Activated CD4-positive, alpha-beta memory T cell treated with anti-CD3 and anti-CD28 coated beads, Interleukin-2, amount 10 ng/mL, durations not matched to agents 7 days and 5 days (primary cell): ENCODE measurements at regions of chr9 and their contacts with region 1.

Region 1: GRCh38 chr9:35790385-35791296 is 750 bp upstream of the NPR2 start:
- DNase-seq: peak; percentile 59
- H3K4me3 Mint-ChIP-seq: no peak overlapping the region
- H3K27ac Mint-ChIP-seq: no peak overlapping the region
- H3K4me1 Mint-ChIP-seq: peaks cover 14% of the 10 kb centered on the region
- H3K27me3 Mint-ChIP-seq: no peaks in the 10 kb centered on the region

Region 2: DNA sequence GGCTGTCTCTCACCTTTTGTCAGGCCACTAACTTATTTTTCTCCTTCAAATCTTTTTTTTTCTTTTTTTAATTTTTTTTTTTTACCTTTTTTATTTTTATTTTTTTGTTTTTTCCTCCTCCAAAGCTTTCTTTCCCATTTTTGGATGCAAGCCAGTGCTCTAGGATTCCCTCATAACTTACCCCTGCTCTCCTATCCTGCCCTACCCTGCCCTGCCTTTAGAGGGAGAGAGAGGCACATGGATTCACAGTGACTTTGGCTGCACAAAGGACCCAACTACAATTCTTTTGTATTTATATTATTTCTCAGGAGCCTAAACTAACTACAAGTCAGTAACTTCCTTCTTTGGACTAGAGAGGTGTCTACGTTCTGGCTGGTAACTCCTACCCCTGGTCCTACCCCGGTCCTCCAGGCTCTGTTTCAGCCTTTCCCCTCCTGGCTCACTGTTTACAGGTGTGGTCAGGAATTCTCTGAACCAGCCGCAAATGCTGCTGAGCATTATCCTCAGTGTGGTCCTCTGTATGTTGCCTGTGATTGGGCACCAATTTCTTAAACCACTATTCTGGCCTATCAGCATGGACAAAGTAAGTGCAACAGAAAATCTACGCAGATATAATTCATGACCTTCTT is 309.2 kb before region 1 on chr9:
- CTCF ChIA-PET with region 1: no interaction called
- POLR2A ChIA-PET with region 1: no interaction called
- DNase-seq: peak; percentile 33
- H3K4me3 Mint-ChIP-seq: no peak overlapping the region
- H3K27ac Mint-ChIP-seq: no peak overlapping the region
- H3K4me1 Mint-ChIP-seq: no peaks in the 10 kb centered on the region
- H3K27me3 Mint-ChIP-seq: peaks cover 3% of the 10 kb centered on the region

Region 3: GRCh38 chr9:35814841-35815543 is 24.4 kb after region 1 on chr9 and contains the start of gene HINT2:
- CTCF ChIA-PET with region 1: interaction called, 16 read pairs
- POLR2A ChIA-PET with region 1: interaction called, 4 read pairs
- DNase-seq: peak; percentile 99
- H3K4me3 Mint-ChIP-seq: peak within 1 kb of the TSS; percentile 87
- H3K27ac Mint-ChIP-seq: peak within 1 kb of the TSS; percentile 92
- H3K4me1 Mint-ChIP-seq: peaks cover 45% of the 10 kb centered on the region
- H3K27me3 Mint-ChIP-seq: peaks cover 4% of the 10 kb centered on the region
- total RNA-seq, gene HINT2: 77.8 to 79.2 TPM

Region 4: GRCh38 chr9:35826071-35826701 is 35.5 kb after region 1 on chr9:
- CTCF ChIA-PET with region 1: interaction called, 35 read pairs
- POLR2A ChIA-PET with region 1: no interaction called
- DNase-seq: peak; percentile 31
- H3K4me3 Mint-ChIP-seq: no peak overlapping the region
- H3K27ac Mint-ChIP-seq: no peak overlapping the region
- H3K4me1 Mint-ChIP-seq: peaks cover 23% of the 10 kb centered on the region
- H3K27me3 Mint-ChIP-seq: peaks cover 9% of the 10 kb centered on the region

Region 5: GRCh38 chr9:35835216-35835632 is 44.6 kb after region 1 on chr9:
- CTCF ChIA-PET with region 1: interaction called, 29 read pairs
- POLR2A ChIA-PET with region 1: no interaction called
- DNase-seq: peak; percentile 29
- H3K4me3 Mint-ChIP-seq: no peak overlapping the region
- H3K27ac Mint-ChIP-seq: no peak overlapping the region
- H3K4me1 Mint-ChIP-seq: peaks cover 3% of the 10 kb centered on the region
- H3K27me3 Mint-ChIP-seq: no peaks in the 10 kb centered on the region

Region 6: DNA sequence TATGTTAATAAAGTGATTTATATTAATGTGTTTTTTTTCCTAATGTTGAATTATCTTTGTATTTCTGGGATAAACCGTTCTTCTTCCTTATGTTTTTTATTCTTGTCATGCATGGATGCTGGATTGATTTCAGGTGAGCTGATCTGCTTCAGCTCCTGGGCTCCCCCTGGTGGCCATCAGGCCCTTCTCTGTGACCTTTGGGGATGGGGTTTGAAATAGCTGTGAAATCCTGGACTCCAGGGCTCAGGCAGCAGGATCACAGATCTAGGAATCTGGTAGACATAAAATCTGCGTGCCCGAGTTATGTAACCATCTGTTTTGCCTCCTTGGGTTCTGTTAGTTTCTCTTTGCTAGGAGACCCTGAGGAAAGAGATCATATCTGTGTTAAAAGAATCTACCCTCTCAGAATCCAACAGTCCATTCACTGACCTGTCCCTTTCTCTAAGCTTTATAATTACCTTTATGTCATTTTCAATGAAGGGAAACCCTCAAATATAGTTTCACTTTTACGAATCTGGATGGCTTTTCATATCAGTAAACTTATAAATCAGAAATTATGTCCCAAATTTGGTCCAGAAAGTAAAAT is 91.7 kb after region 1 on chr9:
- CTCF ChIA-PET with region 1: interaction called, 54 read pairs
- POLR2A ChIA-PET with region 1: interaction called, 4 read pairs
- DNase-seq: peak; percentile 80
- H3K4me3 Mint-ChIP-seq: no peak overlapping the region
- H3K27ac Mint-ChIP-seq: no peak overlapping the region
- H3K4me1 Mint-ChIP-seq: no peaks in the 10 kb centered on the region
- H3K27me3 Mint-ChIP-seq: peaks cover 29% of the 10 kb centered on the region

Region 7: DNA sequence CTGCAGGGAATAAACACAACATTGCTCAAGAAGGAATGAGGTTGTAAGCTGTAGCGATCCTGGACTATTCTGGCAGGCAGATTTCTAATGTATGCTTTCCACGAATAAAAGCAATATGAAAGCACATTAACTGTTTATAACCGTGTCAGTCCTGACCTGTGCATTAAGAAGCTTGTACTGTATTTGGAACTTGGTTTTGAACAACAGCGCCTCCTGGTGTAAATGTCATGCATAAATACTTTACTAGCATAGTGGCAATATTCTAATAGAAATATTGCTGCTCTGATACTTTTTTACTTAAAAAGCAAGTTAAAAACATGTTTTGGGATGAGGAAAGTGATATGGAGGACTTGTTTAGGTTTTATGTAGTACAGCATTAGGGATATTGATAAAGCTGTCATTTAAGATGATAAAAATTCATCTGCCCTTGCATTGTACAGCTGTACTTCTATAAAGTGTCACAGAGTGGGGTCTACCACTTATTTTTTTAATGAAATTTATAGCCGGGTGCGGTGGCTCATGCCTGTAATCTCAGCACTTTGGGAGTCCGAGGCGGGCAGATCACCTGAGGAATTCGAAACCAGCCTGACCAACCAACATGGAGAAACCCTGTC is 538.3 kb after region 1 on chr9:
- CTCF ChIA-PET with region 1: no interaction called
- POLR2A ChIA-PET with region 1: no interaction called
- DNase-seq: peak; percentile 38
- H3K4me3 Mint-ChIP-seq: no peak overlapping the region
- H3K27ac Mint-ChIP-seq: no peak overlapping the region
- H3K4me1 Mint-ChIP-seq: peaks cover 6% of the 10 kb centered on the region
- H3K27me3 Mint-ChIP-seq: no peaks in the 10 kb centered on the region